ENCODE measurements at regions of chr3 and their contacts with region 1.

Region 1: GRCh38 chr3:4845882-4846281 is 133.4 kb upstream of the BHLHE40 start:
- DNase-seq: no peak
- ATAC-seq: peak; percentile 56
- H3K4me3 Mint-ChIP-seq: peak overlapping the region; percentile 3
- H3K27ac Mint-ChIP-seq: peak overlapping the region; percentile 99
- H3K4me1 Mint-ChIP-seq: peaks cover 99% of the 10 kb centered on the region
- H3K27me3 Mint-ChIP-seq: no peaks in the 10 kb centered on the region
- CTCF ChIP-seq: no peak

Region 2: GRCh38 chr3:4826237-4827100 is 19.4 kb before region 1 on chr3:
- CTCF ChIA-PET with region 1: interaction called, 13 read pairs
- POLR2A ChIA-PET with region 1: interaction called, 153 read pairs
- intact Hi-C with region 1: loop called (anchors 1 kb)
- DNase-seq: no peak
- ATAC-seq: no peak
- H3K4me3 Mint-ChIP-seq: peak overlapping the region; percentile 68
- H3K27ac Mint-ChIP-seq: peak overlapping the region; percentile 100
- H3K4me1 Mint-ChIP-seq: peaks cover 95% of the 10 kb centered on the region
- H3K27me3 Mint-ChIP-seq: no peaks in the 10 kb centered on the region
- CTCF ChIP-seq: no peak

Region 3: GRCh38 chr3:4834403-4834866 is 11.4 kb before region 1 on chr3:
- CTCF ChIA-PET with region 1: interaction called, 27 read pairs
- POLR2A ChIA-PET with region 1: interaction called, 153 read pairs
- intact Hi-C with region 1: loop called (anchors 2 kb)
- DNase-seq: peak; percentile 95
- ATAC-seq: peak; percentile 48
- H3K4me3 Mint-ChIP-seq: peak overlapping the region; percentile 63
- H3K27ac Mint-ChIP-seq: peak overlapping the region; percentile 97
- H3K4me1 Mint-ChIP-seq: peaks cover 86% of the 10 kb centered on the region
- H3K27me3 Mint-ChIP-seq: no peaks in the 10 kb centered on the region
- CTCF ChIP-seq: no peak

Region 4: GRCh38 chr3:4877173-4877787 is 31.4 kb after region 1 on chr3:
- CTCF ChIA-PET with region 1: no interaction called
- POLR2A ChIA-PET with region 1: no interaction called
- intact Hi-C with region 1: no loop called
- DNase-seq: no peak
- ATAC-seq: no peak
- H3K4me3 Mint-ChIP-seq: no peak overlapping the region
- H3K27ac Mint-ChIP-seq: no peak overlapping the region
- H3K4me1 Mint-ChIP-seq: peaks cover 21% of the 10 kb centered on the region
- H3K27me3 Mint-ChIP-seq: no peaks in the 10 kb centered on the region
- CTCF ChIP-seq: no peak

Region 5: GRCh38 chr3:4888913-4889846 is 43.3 kb after region 1 on chr3:
- CTCF ChIA-PET with region 1: no interaction called
- POLR2A ChIA-PET with region 1: no interaction called
- intact Hi-C with region 1: loop called (anchors 5 kb)
- DNase-seq: peak; percentile 59
- ATAC-seq: peak; percentile 88
- H3K4me3 Mint-ChIP-seq: no peak overlapping the region
- H3K27ac Mint-ChIP-seq: peak overlapping the region; percentile 88
- H3K4me1 Mint-ChIP-seq: peaks cover 40% of the 10 kb centered on the region
- H3K27me3 Mint-ChIP-seq: no peaks in the 10 kb centered on the region
- CTCF ChIP-seq: no peak

Region 6: GRCh38 chr3:4898454-4899313 is 52.8 kb after region 1 on chr3:
- CTCF ChIA-PET with region 1: no interaction called
- POLR2A ChIA-PET with region 1: interaction called, 3 read pairs
- intact Hi-C with region 1: loop called (anchors 2 kb)
- DNase-seq: peak; percentile 40
- ATAC-seq: peak; percentile 79
- H3K4me3 Mint-ChIP-seq: no peak overlapping the region
- H3K27ac Mint-ChIP-seq: peak overlapping the region; percentile 73
- H3K4me1 Mint-ChIP-seq: peaks cover 40% of the 10 kb centered on the region
- H3K27me3 Mint-ChIP-seq: no peaks in the 10 kb centered on the region
- CTCF ChIP-seq: no peak

Region 7: GRCh38 chr3:5026331-5027218 is 180.7 kb after region 1 on chr3:
- CTCF ChIA-PET with region 1: interaction called, 3 read pairs
- POLR2A ChIA-PET with region 1: interaction called, 6 read pairs
- intact Hi-C with region 1: loop called (anchors 5 kb)
- DNase-seq: peak; percentile 83
- ATAC-seq: peak; percentile 60
- H3K4me3 Mint-ChIP-seq: peak overlapping the region; percentile 67
- H3K27ac Mint-ChIP-seq: peak overlapping the region; percentile 86
- H3K4me1 Mint-ChIP-seq: peaks cover 53% of the 10 kb centered on the region
- H3K27me3 Mint-ChIP-seq: peaks cover 9% of the 10 kb centered on the region
- CTCF ChIP-seq: peak; percentile 39

Measured in activated CD8-positive, alpha-beta T cell treated with anti-CD3 and anti-CD28 coated beads for 36 hours (primary cell).